Heart left ventricle (tissue), 16 donors: ENCODE measurements at regions of chr19 and their contacts with region 1.

Region 1: GRCh38 chr19:33778089-33778791 is 18.4 kb upstream of the KCTD15 start:
- DNase-seq: peak; percentile 79 to 93 (median 83)
- ATAC-seq: peak; percentile 69 to 94 (median 84)
- H3K4me3 ChIP-seq: peak overlapping the region in 7 of 12 donors; percentile 8 to 38 (median 28)
- H3K27ac ChIP-seq: no peak overlapping the region
- H3K4me1 ChIP-seq: peaks cover 0 to 16% (median 4%) of the 10 kb centered on the region in 12 donors
- H3K27me3 ChIP-seq: peaks cover 0 to 44% (median 12%) of the 10 kb centered on the region in 9 donors
- CTCF ChIP-seq: peak; percentile 99 to 100 (median 100)
- POLR2A ChIP-seq: peak in 1 of 2 donors; percentile 22

Region 2: DNA sequence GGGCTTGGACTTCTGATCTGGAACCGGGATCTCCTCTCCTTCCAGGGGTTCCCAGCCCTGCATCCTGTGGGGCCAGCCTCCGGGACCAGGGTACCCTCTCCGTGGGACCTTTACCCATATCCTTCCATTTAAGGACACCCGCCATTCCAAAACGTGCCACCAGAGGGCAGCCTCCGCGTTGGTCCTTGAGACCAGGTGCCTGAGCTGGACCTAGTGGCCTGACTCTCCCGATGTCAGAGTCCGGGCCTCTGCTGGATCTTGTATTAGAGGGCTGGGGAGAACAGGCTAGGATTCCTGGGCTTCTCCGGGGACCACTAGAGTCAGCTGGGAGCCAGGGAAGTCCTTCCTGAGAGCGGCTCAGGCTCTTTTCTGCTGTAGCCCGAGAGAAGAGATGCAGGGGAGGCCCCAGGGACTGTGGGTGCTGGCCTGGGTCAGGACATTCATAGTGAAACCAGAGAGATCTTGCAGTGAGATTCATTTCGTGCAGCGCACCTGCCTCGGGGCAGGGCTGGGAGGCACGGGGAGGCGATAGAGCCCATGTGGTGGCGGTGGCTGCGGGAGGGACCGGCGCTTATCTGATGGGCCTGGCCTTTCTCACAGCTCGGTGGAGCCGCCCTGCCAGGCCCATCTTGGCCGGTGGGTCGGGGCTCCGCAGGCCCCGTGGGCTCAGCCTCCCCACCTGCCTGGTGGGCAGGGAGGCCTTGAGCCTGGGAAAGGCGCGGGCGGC is 542.8 kb before region 1 on chr19:
- intact Hi-C with region 1: loop called in 7 of 10 experiments (anchors 5 to 10 kb)
- DNase-seq: peak; percentile 61 to 91 (median 77)
- ATAC-seq: peak in 3 of 4 donors; percentile 67 to 82 (median 71)
- H3K4me3 ChIP-seq: no peak overlapping the region
- H3K27ac ChIP-seq: no peak overlapping the region
- H3K4me1 ChIP-seq: peaks cover 0 to 3% (median 0%) of the 10 kb centered on the region in 12 donors
- H3K27me3 ChIP-seq: peaks cover 0 to 33% (median 6%) of the 10 kb centered on the region in 9 donors
- CTCF ChIP-seq: peak; percentile 82 to 94 (median 90)
- POLR2A ChIP-seq: no peak

Region 3: DNA sequence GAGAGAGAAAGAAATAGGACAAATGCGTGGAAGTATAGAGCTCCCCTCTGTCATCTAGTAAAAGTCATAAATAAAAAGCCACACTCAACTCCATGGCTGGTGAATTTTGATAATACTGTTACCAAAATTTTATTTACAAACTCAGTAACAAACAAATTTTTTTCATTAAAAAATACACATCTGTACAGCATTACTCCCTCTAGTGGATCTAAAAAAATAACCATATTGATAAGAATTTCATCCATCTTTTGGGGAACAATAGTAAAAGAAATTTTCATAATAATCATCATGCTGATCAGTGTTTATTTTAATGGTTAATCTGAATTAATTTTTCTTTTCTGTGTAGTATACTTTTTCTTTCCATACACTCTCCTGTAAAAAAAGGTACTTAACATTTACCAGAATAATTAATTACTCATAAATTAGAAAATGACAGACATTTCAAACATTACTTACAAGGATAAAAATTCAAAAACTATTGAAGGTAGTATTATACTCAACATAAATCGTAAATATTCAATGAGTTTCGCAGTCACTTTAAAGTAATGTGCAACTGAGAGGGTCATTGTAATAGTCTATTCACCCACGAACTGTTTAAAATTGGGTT is 220.6 kb after region 1 on chr19:
- intact Hi-C with region 1: loop called (anchors 1 to 5 kb)
- DNase-seq: no peak
- ATAC-seq: no peak
- H3K4me3 ChIP-seq: no peak overlapping the region
- H3K27ac ChIP-seq: no peak overlapping the region
- H3K4me1 ChIP-seq: no peaks in the 10 kb centered on the region
- H3K27me3 ChIP-seq: peaks cover 0 to 13% (median 2%) of the 10 kb centered on the region in 9 donors
- CTCF ChIP-seq: peak; percentile 27 to 67 (median 52)
- POLR2A ChIP-seq: no peak

Region 4: GRCh38 chr19:34096020-34096915 is 318.0 kb after region 1 on chr19:
- intact Hi-C with region 1: loop called (anchors 1 to 2 kb)
- DNase-seq: no peak
- ATAC-seq: peak in 1 of 4 donors; percentile 58
- H3K4me3 ChIP-seq: no peak overlapping the region
- H3K27ac ChIP-seq: no peak overlapping the region
- H3K4me1 ChIP-seq: peaks cover 0 to 7% (median 0%) of the 10 kb centered on the region in 12 donors
- H3K27me3 ChIP-seq: peaks cover 0 to 12% (median 0%) of the 10 kb centered on the region in 9 donors
- CTCF ChIP-seq: peak; percentile 49 to 75 (median 62)
- POLR2A ChIP-seq: no peak

Region 5: GRCh38 chr19:34145741-34146202 is 367.5 kb after region 1 on chr19:
- intact Hi-C with region 1: loop called (anchors 1 to 5 kb)
- DNase-seq: peak in 2 of 5 donors; percentile 13 to 32
- ATAC-seq: peak in 1 of 4 donors; percentile 46
- H3K4me3 ChIP-seq: no peak overlapping the region
- H3K27ac ChIP-seq: no peak overlapping the region
- H3K4me1 ChIP-seq: no peaks in the 10 kb centered on the region
- H3K27me3 ChIP-seq: peaks cover 0 to 3% (median 0%) of the 10 kb centered on the region in 9 donors
- CTCF ChIP-seq: peak; percentile 58 to 87 (median 78)
- POLR2A ChIP-seq: no peak

Region 6: GRCh38 chr19:34712395-34713261 is 934.4 kb after region 1 on chr19:
- intact Hi-C with region 1: loop called in 1 of 10 experiments (anchors 10 kb)
- DNase-seq: peak in 4 of 5 donors; percentile 30 to 56 (median 42)
- ATAC-seq: peak; percentile 37 to 80 (median 72)
- H3K4me3 ChIP-seq: no peak overlapping the region
- H3K27ac ChIP-seq: no peak overlapping the region
- H3K4me1 ChIP-seq: no peaks in the 10 kb centered on the region
- H3K27me3 ChIP-seq: no peaks in the 10 kb centered on the region
- CTCF ChIP-seq: peak; percentile 68 to 96 (median 80)
- POLR2A ChIP-seq: no peak